ENCODE measurements at regions of chr10 and their contacts with region 1.

Region 1: GRCh38 chr10:59906417-59907202 is at the start of gene CCDC6:
- DNase-seq: peak; percentile 68 to 96
- H3K4me3 ChIP-seq: peak within 1 kb of the TSS; percentile 80 to 87
- H3K27ac ChIP-seq: peak within 1 kb of the TSS; percentile 90 to 95
- H3K4me1 ChIP-seq: peaks cover 0 to 12% of the 10 kb centered on the region in 2 donors
- H3K27me3 ChIP-seq: no peaks in the 10 kb centered on the region
- CTCF ChIP-seq: peak; percentile 77 to 97 (median 91)
- total RNA-seq, gene CCDC6: 21.1 TPM

Region 2: GRCh38 chr10:58268870-58269605 is 1637.6 kb before region 1 on chr10 and contains the start of gene CISD1:
- intact Hi-C with region 1: loop called (anchors 5 kb)
- DNase-seq: peak; percentile 95 to 98
- H3K4me3 ChIP-seq: peak within 1 kb of the TSS; percentile 84 to 87
- H3K27ac ChIP-seq: peak within 1 kb of the TSS; percentile 96
- H3K4me1 ChIP-seq: peaks cover 0 to 10% of the 10 kb centered on the region in 2 donors
- H3K27me3 ChIP-seq: no peaks in the 10 kb centered on the region
- CTCF ChIP-seq: no peak
- total RNA-seq, gene CISD1: 18.0 TPM

Region 3: DNA sequence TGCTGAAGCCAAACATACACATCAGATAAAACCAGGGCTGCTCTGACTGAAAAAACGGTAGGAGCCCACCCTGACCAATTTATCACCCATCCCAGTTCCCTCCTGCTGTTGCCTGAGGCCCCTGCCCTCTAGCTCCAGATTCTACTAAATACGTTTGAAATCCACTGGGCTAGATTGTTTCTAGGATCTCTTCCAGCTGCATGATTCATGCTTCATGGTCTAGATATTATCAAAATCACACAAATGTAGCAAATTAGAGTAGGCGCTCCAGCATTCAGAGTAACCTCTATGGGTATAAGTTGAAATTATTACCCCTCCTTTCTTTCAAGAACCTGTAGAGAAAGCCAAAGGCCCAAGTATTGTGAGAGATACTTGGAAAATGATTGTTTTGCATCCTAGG is 393.1 kb before region 1 on chr10:
- intact Hi-C with region 1: no loop called
- DNase-seq: no peak
- H3K4me3 ChIP-seq: no peak overlapping the region
- H3K27ac ChIP-seq: no peak overlapping the region
- H3K4me1 ChIP-seq: no peaks in the 10 kb centered on the region
- H3K27me3 ChIP-seq: no peaks in the 10 kb centered on the region
- CTCF ChIP-seq: no peak

Region 4: DNA sequence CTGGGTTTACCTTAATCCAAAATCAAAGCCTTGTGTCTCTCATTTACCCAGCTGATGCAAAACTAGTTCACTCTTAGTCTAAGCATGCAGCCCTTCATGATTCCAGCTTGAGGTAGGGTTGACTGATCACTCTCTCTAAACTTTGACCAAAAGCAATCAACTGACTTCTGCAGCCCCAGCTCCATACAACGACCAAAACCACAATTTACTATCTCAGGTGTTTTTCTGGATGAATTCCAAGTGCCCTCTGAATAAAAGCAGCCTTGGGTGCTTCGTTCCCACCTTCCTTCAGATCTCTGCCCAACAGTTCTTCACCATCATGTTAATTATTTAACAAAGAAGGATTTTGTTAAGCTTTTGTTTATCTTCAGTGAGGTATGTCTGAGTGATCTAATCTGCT is 62.9 kb before region 1 on chr10:
- intact Hi-C with region 1: loop called (anchors 2 kb)
- DNase-seq: no peak
- H3K4me3 ChIP-seq: no peak overlapping the region
- H3K27ac ChIP-seq: peak overlapping the region; percentile 61 to 79
- H3K4me1 ChIP-seq: peaks cover 5 to 18% of the 10 kb centered on the region in 2 donors
- H3K27me3 ChIP-seq: no peaks in the 10 kb centered on the region
- CTCF ChIP-seq: no peak

Region 5: DNA sequence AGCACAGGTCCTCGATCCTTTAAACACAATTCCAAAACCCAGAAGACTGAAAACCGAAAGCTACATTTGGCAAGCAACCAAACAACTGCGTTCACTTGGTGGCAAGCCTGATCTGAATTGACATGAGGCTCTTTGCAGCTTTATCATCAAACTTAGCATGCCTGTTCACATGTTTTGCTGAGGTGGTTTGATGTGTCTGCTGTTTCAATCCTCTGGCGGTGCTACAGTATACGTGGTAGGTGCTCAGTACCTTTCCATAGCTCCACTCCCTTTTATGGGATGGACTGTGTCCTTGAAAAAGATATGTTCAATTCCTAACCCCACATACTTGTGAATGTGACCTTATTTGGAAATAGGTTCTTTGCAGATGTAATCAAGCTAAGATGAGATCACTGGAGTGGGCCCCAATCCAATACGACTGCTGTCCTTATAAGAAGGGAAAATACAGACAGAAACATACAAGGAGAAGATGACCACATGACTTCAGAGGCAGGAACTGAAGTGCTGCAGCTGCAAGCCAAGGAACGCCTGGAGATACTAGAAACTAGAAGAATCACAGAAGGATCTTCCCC is 33.6 kb before region 1 on chr10:
- intact Hi-C with region 1: loop called (anchors 2 kb)
- DNase-seq: peak; percentile 54 to 93
- H3K4me3 ChIP-seq: peak overlapping the region; percentile 20 to 57
- H3K27ac ChIP-seq: peak overlapping the region; percentile 75 to 84
- H3K4me1 ChIP-seq: peaks cover 5 to 45% of the 10 kb centered on the region in 2 donors
- H3K27me3 ChIP-seq: no peaks in the 10 kb centered on the region
- CTCF ChIP-seq: no peak

Region 6: DNA sequence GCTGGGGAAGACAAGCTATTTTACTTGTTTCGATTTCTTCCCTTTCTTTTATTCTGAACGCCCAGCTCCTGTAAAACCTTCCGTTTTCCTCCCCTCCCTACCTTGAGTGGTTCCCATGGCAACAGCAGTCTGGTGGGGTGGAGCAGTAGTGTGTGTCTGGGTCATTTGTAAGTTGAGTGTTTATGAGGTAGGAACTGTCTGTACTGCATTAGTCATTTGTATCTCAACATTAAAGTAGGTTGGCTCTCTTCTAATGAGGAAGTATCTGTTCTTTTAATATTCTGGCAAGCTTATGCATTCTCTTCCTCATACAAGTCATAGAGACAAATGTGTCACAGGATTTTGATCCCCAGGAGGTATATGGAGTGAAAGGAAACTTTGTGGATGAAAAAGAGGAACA is 85.1 kb after region 1 on chr10:
- intact Hi-C with region 1: no loop called
- DNase-seq: peak in 1 of 2 donors; percentile 11
- H3K4me3 ChIP-seq: no peak overlapping the region
- H3K27ac ChIP-seq: no peak overlapping the region
- H3K4me1 ChIP-seq: no peaks in the 10 kb centered on the region
- H3K27me3 ChIP-seq: no peaks in the 10 kb centered on the region
- CTCF ChIP-seq: no peak

Region 7: GRCh38 chr10:60086862-60087261 is 180.3 kb after region 1 on chr10:
- intact Hi-C with region 1: no loop called
- DNase-seq: no peak
- H3K4me3 ChIP-seq: no peak overlapping the region
- H3K27ac ChIP-seq: peak overlapping the region; percentile 21 to 45
- H3K4me1 ChIP-seq: peaks cover 0 to 8% of the 10 kb centered on the region in 2 donors
- H3K27me3 ChIP-seq: no peaks in the 10 kb centered on the region
- CTCF ChIP-seq: no peak

Region 8: DNA sequence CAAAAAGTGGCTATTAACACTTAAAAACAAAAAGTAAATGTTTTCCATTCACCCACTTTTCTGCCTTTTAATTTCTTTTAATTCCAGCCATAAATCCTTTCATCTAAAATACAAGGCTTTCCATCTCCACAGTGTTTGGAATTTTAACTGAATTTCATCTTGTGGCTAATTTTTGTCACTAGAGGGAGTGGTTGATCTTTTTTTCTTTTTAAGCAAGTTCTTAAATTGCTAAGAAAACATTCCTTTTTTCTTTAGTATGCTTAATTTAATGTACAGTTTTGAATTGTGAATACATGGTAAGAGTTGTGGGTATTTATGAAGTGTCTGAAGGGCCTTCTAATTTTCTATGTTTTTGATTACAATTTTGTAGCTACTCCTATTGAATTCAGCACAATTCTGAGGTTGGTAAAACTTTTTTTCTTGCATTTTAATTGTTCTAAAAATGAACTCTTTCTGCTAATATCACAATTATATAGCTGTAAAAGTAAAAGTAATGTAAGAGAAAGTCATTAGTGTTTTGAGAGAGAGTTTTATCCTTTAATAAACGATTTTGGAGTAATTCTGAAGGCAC is 538.0 kb after region 1 on chr10:
- intact Hi-C with region 1: loop called (anchors 10 kb)
- DNase-seq: no peak
- H3K4me3 ChIP-seq: no peak overlapping the region
- H3K27ac ChIP-seq: peak overlapping the region; percentile 29 to 82
- H3K4me1 ChIP-seq: peaks cover 5 to 34% of the 10 kb centered on the region in 2 donors
- H3K27me3 ChIP-seq: no peaks in the 10 kb centered on the region
- CTCF ChIP-seq: peak; percentile 37 to 69 (median 53)

Measured in ascending aorta (tissue), 2 donors.